ENCODE measurements at regions of chr2 and their contacts with region 1.

Region 1: DNA sequence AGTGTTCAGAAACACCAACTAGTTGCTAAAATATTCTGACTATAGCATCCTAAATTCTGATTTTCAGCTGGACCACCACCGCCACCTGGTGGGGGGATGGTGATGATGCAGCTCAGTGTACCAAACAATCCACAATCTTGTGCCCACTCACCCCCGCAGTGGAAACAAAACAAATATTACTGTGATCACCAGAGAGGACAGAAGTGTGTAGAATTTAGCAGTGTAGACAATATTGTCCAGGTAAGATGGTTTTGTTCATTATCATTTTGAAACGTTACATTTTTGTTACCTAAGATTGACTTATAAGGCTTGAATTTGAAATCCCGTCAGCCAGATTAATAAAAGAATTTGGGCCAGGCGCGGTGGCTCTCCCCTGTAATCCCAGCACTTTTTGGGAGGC is 31.7 kb upstream of the UBXN4 start:
- DNase-seq: peak; percentile 42
- H3K4me3 Mint-ChIP-seq: no peak overlapping the region
- H3K27ac Mint-ChIP-seq: no peak overlapping the region
- H3K4me1 Mint-ChIP-seq: no peaks in the 10 kb centered on the region
- H3K27me3 Mint-ChIP-seq: no peaks in the 10 kb centered on the region

Region 2: GRCh38 chr2:134988994-134989605 is 720.9 kb before region 1 on chr2:
- intact Hi-C with region 1: loop called (anchors 1 kb)
- DNase-seq: no peak
- H3K4me3 Mint-ChIP-seq: no peak overlapping the region
- H3K27ac Mint-ChIP-seq: no peak overlapping the region
- H3K4me1 Mint-ChIP-seq: no peaks in the 10 kb centered on the region
- H3K27me3 Mint-ChIP-seq: peaks cover 22% of the 10 kb centered on the region

Region 3: GRCh38 chr2:135004005-135004746 is 705.8 kb before region 1 on chr2:
- intact Hi-C with region 1: loop called (anchors 1 kb)
- DNase-seq: peak; percentile 47
- H3K4me3 Mint-ChIP-seq: no peak overlapping the region
- H3K27ac Mint-ChIP-seq: no peak overlapping the region
- H3K4me1 Mint-ChIP-seq: peaks cover 7% of the 10 kb centered on the region
- H3K27me3 Mint-ChIP-seq: peaks cover 13% of the 10 kb centered on the region

Region 4: DNA sequence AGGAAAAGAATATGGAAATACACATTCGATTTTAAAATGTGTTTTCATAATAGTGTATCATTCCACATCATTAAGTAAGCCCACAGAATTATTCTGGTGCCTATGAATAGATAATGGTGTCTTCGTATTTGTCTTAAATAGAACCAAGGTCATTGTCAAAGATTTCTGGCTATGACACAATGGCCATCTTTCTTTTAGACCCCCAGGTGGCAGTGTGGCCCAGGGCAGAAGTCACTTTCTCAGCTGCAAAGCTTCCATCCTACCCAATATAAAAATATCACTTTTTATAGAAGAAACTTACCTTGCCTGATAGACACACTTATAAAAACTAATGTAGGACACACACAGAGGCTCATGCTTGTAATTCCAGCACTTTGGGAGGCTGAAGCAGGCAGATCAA is 236.4 kb before region 1 on chr2:
- intact Hi-C with region 1: loop called (anchors 1 kb)
- DNase-seq: no peak
- H3K4me3 Mint-ChIP-seq: no peak overlapping the region
- H3K27ac Mint-ChIP-seq: no peak overlapping the region
- H3K4me1 Mint-ChIP-seq: peaks cover 6% of the 10 kb centered on the region
- H3K27me3 Mint-ChIP-seq: no peaks in the 10 kb centered on the region

Region 5: DNA sequence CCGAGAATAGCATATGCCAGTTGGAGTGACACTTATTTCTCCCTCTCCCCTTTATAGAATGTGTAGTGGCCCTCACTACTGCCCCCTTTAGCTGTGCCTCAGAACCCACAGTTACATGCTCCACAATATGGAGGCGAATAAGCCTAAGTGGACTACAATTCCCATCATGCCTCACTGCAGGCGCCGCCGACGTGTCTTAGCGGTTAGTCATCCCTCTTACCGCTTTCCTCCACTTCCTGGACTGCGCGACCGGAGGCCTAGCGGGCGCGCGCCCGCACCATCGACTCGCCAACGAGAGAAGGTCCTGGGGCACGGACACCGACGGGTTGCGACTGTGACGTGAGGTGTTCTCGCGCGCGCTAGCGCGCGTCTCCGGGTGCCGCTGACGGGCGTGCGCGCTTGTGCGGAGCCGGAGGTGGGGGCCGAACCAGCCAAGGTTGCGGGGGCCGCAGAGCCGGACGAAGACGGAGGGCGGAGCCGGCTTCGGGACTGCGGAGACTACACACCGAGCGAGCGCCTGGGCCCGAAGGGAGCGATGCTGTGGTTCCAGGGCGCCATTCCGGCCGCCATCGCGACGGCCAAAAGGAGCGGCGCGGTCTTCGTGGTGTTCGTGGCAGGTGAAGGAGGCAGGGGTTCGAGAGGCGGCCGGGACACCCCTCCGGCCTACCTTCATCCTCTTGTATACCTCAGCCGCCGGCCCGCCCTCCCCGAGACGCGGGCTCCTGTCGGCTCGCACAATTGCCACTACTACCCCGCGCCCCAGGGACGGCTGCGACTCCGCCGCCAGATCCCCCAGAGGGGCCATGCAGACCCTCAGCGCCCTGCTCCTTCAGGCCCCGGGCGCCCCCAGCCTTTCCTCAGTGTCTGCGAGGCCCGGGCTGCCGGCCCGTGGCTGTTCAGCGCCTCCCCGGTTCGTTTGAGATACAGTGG is 31.7 kb after region 1 on chr2 and contains the start of gene UBXN4:
- intact Hi-C with region 1: loop called (anchors 1 kb)
- DNase-seq: peak; percentile 89
- H3K4me3 Mint-ChIP-seq: peak within 1 kb of the TSS; percentile 99
- H3K27ac Mint-ChIP-seq: peak within 1 kb of the TSS; percentile 100
- H3K4me1 Mint-ChIP-seq: peaks cover 36% of the 10 kb centered on the region
- H3K27me3 Mint-ChIP-seq: no peaks in the 10 kb centered on the region
- total RNA-seq, gene UBXN4: 115 and 121 TPM in 2 replicates

Region 6: DNA sequence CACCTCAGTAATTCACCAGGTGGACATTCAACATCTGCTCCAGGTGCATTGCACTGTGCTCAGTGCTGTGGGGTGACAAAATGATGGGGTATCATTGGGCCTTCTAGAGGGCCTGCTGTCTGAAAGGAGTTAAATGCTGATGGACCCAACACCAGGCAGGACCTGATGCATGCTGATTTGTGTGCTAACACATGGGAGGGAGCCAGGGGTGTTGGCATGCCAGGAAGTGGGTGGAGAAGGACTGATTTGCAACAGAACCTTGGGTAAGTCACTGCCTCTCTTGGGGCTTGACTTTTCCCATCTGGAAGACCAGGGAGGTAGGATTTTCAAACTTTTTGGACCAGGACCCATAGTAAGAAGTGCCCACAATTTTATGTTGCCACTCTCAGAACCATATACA is 465.9 kb after region 1 on chr2:
- intact Hi-C with region 1: no loop called
- DNase-seq: no peak
- H3K4me3 Mint-ChIP-seq: no peak overlapping the region
- H3K27ac Mint-ChIP-seq: no peak overlapping the region
- H3K4me1 Mint-ChIP-seq: peaks cover 12% of the 10 kb centered on the region
- H3K27me3 Mint-ChIP-seq: peaks cover 8% of the 10 kb centered on the region